CD4-positive, alpha-beta T cell (primary cell): ENCODE measurements at regions of chr1 and their contacts with region 1.

Region 1: GRCh38 chr1:119150150-119150549 is 9.7 kb upstream of the WARS2 start:
- DNase-seq: no peak
- ATAC-seq: no peak
- H3K4me3 ChIP-seq: no peak overlapping the region
- H3K4me3 Mint-ChIP-seq: no peak overlapping the region
- H3K27ac ChIP-seq: no peak overlapping the region
- H3K27ac Mint-ChIP-seq: no peak overlapping the region
- H3K4me1 ChIP-seq: no peaks in the 10 kb centered on the region
- H3K4me1 Mint-ChIP-seq: peaks cover 7% of the 10 kb centered on the region
- H3K27me3 ChIP-seq: no peaks in the 10 kb centered on the region
- H3K27me3 Mint-ChIP-seq: no peaks in the 10 kb centered on the region
- CTCF ChIP-seq: no peak

Region 2: GRCh38 chr1:119132179-119132578 is 18.0 kb before region 1 on chr1:
- CTCF ChIA-PET with region 1: no interaction called
- POLR2A ChIA-PET with region 1: no interaction called
- intact Hi-C with region 1: loop called in 1 of 2 experiments (anchors 2 kb)
- DNase-seq: no peak
- ATAC-seq: no peak
- H3K4me3 ChIP-seq: no peak overlapping the region
- H3K4me3 Mint-ChIP-seq: no peak overlapping the region
- H3K27ac ChIP-seq: no peak overlapping the region
- H3K27ac Mint-ChIP-seq: no peak overlapping the region
- H3K4me1 ChIP-seq: no peaks in the 10 kb centered on the region
- H3K4me1 Mint-ChIP-seq: no peaks in the 10 kb centered on the region
- H3K27me3 ChIP-seq: no peaks in the 10 kb centered on the region
- H3K27me3 Mint-ChIP-seq: no peaks in the 10 kb centered on the region
- CTCF ChIP-seq: no peak